Right cardiac atrium (tissue), 5 donors: ENCODE measurements at regions of chr2 and their contacts with region 1.

Region 1: DNA sequence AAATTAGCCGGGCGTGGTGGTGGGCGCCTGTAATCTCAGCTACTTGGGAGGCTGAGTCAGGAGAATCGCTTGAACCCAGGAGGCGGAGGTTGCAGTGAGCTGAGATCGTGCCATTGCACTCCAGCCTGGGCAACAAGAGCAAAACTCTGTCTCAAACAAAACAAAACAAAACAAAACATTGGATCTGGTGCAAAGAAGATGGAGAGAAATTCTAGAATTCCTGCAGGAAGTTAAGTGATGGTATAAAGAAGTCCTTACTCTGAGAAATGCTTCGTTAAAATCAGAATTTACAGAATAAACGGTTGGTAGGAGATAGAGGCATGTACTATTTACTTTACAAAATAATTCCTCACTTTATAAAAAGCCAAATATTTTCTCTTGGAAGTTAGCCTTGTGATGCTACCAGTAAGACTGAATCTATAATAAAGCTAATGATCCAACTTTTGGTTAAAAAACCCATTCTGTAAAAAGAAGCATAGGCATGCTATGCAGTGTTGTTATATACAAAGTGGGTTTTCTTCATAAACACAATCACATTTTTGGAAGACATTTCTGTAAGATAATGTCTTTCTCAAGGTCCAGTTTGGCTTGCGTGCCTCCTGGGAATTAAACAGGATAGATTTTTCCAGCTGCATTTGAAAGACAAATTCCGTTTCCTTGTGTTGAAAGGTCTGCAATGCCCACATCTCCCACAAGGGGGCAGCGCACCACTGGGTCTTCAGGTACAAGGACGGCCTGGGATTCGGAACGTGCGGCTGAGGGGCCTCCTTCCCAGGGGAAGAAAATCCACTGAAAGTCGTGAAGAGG is 35.6 kb upstream of the PNO1 start:
- DNase-seq: peak; percentile 87 to 95 (median 91)
- ATAC-seq: peak; percentile 53 to 76
- H3K4me3 ChIP-seq: no peak overlapping the region
- H3K27ac ChIP-seq: no peak overlapping the region
- H3K4me1 ChIP-seq: no peaks in the 10 kb centered on the region
- H3K27me3 ChIP-seq: no peaks in the 10 kb centered on the region

Region 2: GRCh38 chr2:68044099-68044498 is 78.0 kb before region 1 on chr2:
- intact Hi-C with region 1: no loop called
- DNase-seq: no peak
- ATAC-seq: no peak
- H3K4me3 ChIP-seq: no peak overlapping the region
- H3K27ac ChIP-seq: no peak overlapping the region
- H3K4me1 ChIP-seq: no peaks in the 10 kb centered on the region
- H3K27me3 ChIP-seq: no peaks in the 10 kb centered on the region

Region 3: DNA sequence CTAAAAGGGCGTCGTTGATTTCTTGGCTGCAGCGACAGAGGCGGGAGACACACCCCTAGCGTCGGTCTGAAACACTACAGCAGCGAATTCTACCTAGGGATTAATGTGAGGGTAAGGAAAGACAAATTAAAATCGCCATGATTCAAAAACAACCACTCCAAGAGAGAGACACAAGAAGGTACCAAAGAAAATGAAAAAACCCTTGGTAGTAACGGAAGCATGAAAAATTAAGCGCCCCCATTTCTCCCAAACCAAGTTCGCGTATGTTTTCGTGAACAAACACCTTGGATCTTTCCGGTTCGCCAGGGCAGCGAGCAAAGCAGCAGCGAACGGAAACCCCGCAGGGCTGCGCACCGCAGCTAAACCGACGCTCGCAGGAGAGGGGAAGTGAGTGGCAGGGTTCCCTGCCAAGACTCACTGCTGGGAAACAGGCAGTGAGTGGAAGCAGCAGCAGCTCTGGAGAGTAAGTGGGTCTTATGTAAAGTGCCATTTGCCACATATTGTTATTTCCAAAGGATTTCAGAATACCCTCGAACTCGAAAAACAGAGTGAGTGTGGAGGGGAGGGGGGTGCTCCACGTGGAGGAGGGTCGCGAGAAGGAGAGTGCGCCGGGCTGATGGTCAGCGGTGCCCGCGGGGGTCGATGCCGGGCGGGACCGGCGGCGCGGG is 129.2 kb after region 1 on chr2:
- intact Hi-C with region 1: loop called in 1 of 4 experiments (anchors 10 kb)
- DNase-seq: peak; percentile 61 to 80 (median 78)
- ATAC-seq: peak; percentile 55 to 59
- H3K4me3 ChIP-seq: peak overlapping the region; percentile 99
- H3K27ac ChIP-seq: peak overlapping the region; percentile 96
- H3K4me1 ChIP-seq: peaks cover 6% of the 10 kb centered on the region
- H3K27me3 ChIP-seq: no peaks in the 10 kb centered on the region

Region 4: DNA sequence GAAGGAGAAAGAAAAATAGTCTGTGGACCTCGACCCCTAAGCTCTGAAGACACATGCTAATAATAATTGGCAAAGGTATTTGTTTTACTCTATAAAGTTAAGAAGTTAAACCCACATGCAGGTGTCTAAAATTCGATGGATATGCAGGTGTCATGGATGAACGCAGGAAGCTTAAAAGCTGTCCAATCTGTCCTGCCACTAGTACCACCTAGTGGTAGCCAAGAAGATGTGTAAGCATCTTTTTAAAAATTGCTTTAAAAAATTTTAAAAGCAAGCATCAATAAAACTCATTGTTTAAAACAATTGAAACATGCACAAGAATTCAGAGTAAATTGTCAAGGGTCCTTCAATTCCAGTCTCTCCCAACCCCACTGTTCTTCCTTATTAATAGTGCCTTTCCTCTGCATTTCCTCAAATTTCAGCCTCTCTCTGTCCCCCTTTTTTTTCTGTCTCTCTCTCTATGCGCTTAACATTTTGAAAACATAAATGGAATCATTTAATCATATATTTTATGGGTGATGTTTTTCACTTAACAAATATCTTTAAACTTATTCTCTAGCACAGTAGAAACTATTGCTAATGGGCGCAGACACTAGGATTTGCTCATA is 160.8 kb after region 1 on chr2:
- intact Hi-C with region 1: loop called (anchors 5 to 10 kb)
- DNase-seq: no peak
- ATAC-seq: no peak
- H3K4me3 ChIP-seq: no peak overlapping the region
- H3K27ac ChIP-seq: no peak overlapping the region
- H3K4me1 ChIP-seq: peaks cover 4% of the 10 kb centered on the region
- H3K27me3 ChIP-seq: no peaks in the 10 kb centered on the region

Region 5: DNA sequence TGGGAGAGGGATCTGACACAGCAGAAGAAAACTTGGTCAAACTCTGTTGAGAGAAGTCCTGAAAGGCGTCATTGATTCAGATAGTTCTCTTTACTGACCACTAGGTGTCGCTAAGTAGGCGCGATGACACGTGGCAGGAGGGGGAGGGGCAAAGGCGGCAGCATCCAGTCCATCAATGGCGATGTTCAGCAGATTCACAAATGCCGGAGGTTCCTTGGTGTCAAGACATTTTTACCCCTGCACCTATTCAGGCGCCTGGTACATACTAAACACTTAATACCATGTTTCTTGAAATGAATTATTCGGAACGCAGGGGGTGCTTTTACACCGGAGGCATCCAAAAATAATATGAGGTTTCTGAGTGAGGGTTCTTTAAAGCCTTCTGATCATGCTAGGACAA is 240.0 kb after region 1 on chr2:
- intact Hi-C with region 1: loop called in 1 of 4 experiments (anchors 10 kb)
- DNase-seq: peak; percentile 76 to 94 (median 89)
- ATAC-seq: peak; percentile 81 to 82
- H3K4me3 ChIP-seq: no peak overlapping the region
- H3K27ac ChIP-seq: no peak overlapping the region
- H3K4me1 ChIP-seq: no peaks in the 10 kb centered on the region
- H3K27me3 ChIP-seq: no peaks in the 10 kb centered on the region

Region 6: DNA sequence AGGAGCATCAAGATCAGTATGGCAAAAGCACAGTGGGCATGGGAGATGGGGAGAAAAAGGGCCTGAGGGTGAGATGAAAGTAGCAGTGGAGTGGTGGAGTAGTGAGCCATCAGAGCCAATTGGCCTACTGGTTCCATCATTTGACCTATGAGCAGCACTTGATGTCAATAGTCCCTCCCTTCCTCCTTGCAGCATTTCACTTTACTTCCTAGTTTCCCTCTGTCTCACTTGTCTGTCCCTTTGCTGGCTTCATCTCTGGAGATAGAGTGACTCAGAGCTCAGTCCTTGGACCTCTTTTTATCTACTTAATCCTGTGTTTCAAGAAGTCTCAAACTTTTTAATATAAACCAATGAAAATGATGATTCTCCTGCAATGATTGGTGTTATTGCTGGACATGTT is 312.9 kb after region 1 on chr2:
- intact Hi-C with region 1: loop called in 2 of 4 experiments (anchors 10 kb)
- DNase-seq: no peak
- ATAC-seq: peak; percentile 8 to 36
- H3K4me3 ChIP-seq: no peak overlapping the region
- H3K27ac ChIP-seq: no peak overlapping the region
- H3K4me1 ChIP-seq: peaks cover 4% of the 10 kb centered on the region
- H3K27me3 ChIP-seq: no peaks in the 10 kb centered on the region

Region 7: GRCh38 chr2:68441179-68441993 is 319.3 kb after region 1 on chr2:
- intact Hi-C with region 1: loop called in 2 of 4 experiments (anchors 10 kb)
- DNase-seq: peak; percentile 70 to 87 (median 86)
- ATAC-seq: peak; percentile 92 to 93
- H3K4me3 ChIP-seq: no peak overlapping the region
- H3K27ac ChIP-seq: peak overlapping the region; percentile 59
- H3K4me1 ChIP-seq: peaks cover 4% of the 10 kb centered on the region
- H3K27me3 ChIP-seq: no peaks in the 10 kb centered on the region